CD4-positive, alpha-beta T cell (primary cell): ENCODE measurements at regions of chr20 and their contacts with region 1.

Region 1: DNA sequence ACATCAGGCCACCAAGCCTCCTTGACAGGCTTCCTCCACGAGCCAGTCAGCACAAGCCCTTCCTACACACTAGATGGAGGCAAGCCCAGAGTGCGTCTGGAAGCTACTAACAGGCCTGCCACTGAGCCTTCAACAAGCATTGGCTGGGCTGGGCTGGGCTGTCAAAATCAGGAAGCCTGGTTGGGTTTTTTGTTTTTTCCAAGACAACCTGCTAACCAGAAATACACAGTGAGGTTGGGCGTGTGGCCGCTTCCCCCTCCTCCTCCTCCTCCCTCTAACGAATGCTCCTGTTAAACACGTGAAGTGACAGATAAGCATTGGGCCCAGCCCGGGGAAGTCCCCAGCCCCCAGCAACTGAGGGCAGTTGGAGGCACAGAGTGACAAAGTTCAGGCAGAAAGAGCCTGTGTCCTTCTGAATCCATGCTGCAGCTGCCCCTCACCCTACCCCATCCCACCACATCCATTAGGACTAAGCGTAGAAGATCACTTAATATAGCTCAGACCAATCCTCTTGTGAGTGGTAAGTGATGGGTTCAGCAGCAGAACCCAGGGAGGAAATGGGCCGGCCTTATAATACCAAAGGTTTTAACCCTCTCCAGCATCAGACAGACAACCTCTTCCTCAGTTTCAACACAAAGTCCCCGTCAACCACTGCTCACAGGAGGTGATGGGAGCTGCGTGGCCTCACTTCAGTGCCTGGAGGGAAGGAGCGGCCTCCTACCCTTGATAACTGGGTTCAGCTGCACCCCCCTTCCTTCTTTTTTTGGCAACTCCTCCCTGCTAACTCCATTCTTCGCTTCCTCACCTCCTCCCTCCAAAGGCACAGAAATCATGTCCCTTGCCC is 1.1 kb downstream of the NFATC2 start:
- DNase-seq: peak; percentile 45 to 95 (median 74)
- ATAC-seq: peak; percentile 79
- H3K4me3 ChIP-seq: peak overlapping the region; percentile 68
- H3K4me3 Mint-ChIP-seq: peak overlapping the region; percentile 98
- H3K27ac ChIP-seq: peak overlapping the region; percentile 82 to 99
- H3K27ac Mint-ChIP-seq: peak overlapping the region; percentile 89
- H3K4me1 ChIP-seq: peaks cover 50% of the 10 kb centered on the region
- H3K4me1 Mint-ChIP-seq: peaks cover 55% of the 10 kb centered on the region
- H3K27me3 ChIP-seq: no peaks in the 10 kb centered on the region
- H3K27me3 Mint-ChIP-seq: no peaks in the 10 kb centered on the region
- CTCF ChIP-seq: no peak

Region 2: GRCh38 chr20:51404298-51405060 is 136.9 kb before region 1 on chr20:
- CTCF ChIA-PET with region 1: interaction called, 3 read pairs
- POLR2A ChIA-PET with region 1: interaction called, 12 read pairs
- intact Hi-C with region 1: loop called (anchors 2 to 5 kb)
- DNase-seq: peak; percentile 69 to 97 (median 82)
- ATAC-seq: peak; percentile 79
- H3K4me3 ChIP-seq: no peak overlapping the region
- H3K4me3 Mint-ChIP-seq: peak overlapping the region; percentile 43
- H3K27ac ChIP-seq: peak overlapping the region; percentile 87 to 90
- H3K27ac Mint-ChIP-seq: peak overlapping the region; percentile 99
- H3K4me1 ChIP-seq: peaks cover 89% of the 10 kb centered on the region
- H3K4me1 Mint-ChIP-seq: peaks cover 64% of the 10 kb centered on the region
- H3K27me3 ChIP-seq: no peaks in the 10 kb centered on the region
- H3K27me3 Mint-ChIP-seq: no peaks in the 10 kb centered on the region
- CTCF ChIP-seq: no peak

Region 3: DNA sequence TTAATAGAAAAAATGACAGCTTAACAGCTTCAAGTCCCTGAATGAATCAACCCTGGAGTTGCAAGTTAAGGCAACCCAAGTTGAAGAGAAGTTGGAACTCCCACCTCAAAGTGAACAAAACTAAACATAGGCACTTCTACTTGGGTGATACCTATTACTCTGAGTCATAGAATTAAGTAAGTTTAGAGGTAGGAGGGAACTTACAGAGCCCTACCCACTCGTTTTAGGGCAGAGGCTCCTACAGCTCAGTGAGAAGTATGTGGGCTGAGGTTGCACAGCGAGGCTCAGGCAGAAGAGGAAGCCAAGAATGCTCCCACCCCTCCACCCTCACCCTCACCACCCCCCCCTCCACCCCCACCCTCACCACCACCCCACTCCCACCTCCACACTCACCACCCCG is 41.1 kb before region 1 on chr20:
- CTCF ChIA-PET with region 1: interaction called, 13 read pairs
- POLR2A ChIA-PET with region 1: interaction called, 37 read pairs
- intact Hi-C with region 1: loop called (anchors 1 to 5 kb)
- DNase-seq: peak in 13 of 14 experiments; percentile 22 to 86 (median 52)
- ATAC-seq: peak; percentile 84
- H3K4me3 ChIP-seq: no peak overlapping the region
- H3K4me3 Mint-ChIP-seq: peak overlapping the region; percentile 63
- H3K27ac ChIP-seq: peak overlapping the region; percentile 39 to 60
- H3K27ac Mint-ChIP-seq: peak overlapping the region; percentile 97
- H3K4me1 ChIP-seq: peaks cover 67% of the 10 kb centered on the region
- H3K4me1 Mint-ChIP-seq: peaks cover 91% of the 10 kb centered on the region
- H3K27me3 ChIP-seq: no peaks in the 10 kb centered on the region
- H3K27me3 Mint-ChIP-seq: no peaks in the 10 kb centered on the region
- CTCF ChIP-seq: no peak

Region 4: DNA sequence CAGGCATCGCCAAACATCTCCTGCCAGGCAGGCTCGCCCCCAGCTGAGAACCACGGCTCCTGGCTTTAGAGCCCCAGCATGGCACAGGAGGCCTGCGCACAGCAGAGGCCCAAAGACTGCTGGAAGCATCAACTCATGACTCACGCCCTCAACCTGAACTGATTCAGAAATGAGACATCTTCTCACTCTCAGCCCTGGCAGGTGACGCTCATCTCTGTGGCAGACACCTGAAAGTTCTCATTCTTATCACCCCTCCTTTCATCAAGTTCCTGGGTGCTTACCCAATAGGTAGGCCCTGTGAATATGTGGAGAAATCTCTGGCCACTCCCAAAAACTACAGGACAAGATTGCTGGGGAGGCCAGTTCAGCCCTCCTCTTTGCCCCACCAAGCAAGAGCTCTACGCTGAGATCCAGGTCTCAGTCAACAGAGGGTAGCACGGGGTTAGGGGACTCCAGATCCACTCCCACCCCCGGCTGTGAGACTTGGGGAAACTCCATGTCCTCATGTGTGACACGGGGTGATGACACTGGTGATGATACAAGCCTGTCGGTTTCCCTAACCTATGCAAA is 10.2 kb before region 1 on chr20:
- CTCF ChIA-PET with region 1: interaction called, 15 read pairs
- POLR2A ChIA-PET with region 1: interaction called, 14 read pairs
- intact Hi-C with region 1: loop called in 1 of 2 experiments (anchors 1 kb)
- DNase-seq: peak in 13 of 14 experiments; percentile 31 to 88 (median 58)
- ATAC-seq: peak; percentile 70
- H3K4me3 ChIP-seq: no peak overlapping the region
- H3K4me3 Mint-ChIP-seq: peak overlapping the region; percentile 86
- H3K27ac ChIP-seq: peak overlapping the region; percentile 72 to 73
- H3K27ac Mint-ChIP-seq: peak overlapping the region; percentile 93
- H3K4me1 ChIP-seq: peaks cover 95% of the 10 kb centered on the region
- H3K4me1 Mint-ChIP-seq: peaks cover 99% of the 10 kb centered on the region
- H3K27me3 ChIP-seq: no peaks in the 10 kb centered on the region
- H3K27me3 Mint-ChIP-seq: no peaks in the 10 kb centered on the region
- CTCF ChIP-seq: no peak